PC-9 (cell line): ENCODE measurements at regions of chr19 and their contacts with region 1.

Region 1: DNA sequence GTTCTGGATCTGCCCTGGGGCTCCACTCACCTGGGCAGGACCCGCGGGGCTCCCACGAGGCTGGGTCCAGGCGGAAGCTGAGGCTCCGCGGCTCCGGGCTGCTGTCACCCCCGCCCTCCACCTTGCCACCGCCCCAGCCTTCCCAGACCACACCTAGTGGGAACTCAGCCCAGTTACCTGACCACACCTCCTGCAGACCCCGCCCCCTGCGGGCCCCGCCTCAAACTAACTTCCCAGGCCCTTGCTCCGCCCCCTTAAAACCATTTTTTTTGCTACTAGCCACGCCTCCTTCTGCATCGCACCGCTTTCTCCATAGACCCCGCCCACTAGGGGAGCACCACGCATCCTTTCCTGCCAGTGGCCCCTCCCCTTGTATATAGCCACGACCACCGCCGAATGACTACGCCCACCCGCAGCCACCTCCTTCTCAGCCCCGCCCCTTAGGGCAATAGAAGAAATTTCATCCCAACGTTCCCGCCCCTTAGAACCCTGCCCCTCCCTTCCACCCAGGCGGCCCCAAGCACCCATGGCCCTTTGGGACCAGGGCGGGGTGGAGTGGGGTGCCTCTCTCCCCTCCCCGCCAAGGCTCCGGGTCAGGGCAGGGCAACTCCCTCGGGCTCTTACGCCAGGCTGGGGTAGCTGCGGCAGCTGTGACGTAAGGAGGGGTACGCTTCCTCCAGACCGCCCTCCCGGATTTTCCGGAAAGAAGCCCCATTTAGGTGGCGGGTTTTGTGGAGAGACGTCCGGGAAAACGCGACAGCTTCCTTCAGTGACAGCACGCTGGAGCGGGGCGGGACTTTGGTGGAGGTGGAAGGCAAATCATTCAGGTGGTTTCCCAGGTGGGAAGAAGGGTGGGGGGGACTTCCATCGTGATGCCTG is at the start of gene SH2D3A:
- DNase-seq: peak; percentile 81 to 93
- H3K4me3 ChIP-seq: peak within 1 kb of the TSS; percentile 74
- H3K27ac ChIP-seq: peak within 1 kb of the TSS; percentile 98
- H3K4me1 ChIP-seq: peaks cover 26% of the 10 kb centered on the region
- H3K27me3 ChIP-seq: no peaks in the 10 kb centered on the region
- CTCF ChIP-seq: no peak
- total RNA-seq, gene SH2D3A: 43.3 and 43.4 TPM in 2 replicates

Region 2: DNA sequence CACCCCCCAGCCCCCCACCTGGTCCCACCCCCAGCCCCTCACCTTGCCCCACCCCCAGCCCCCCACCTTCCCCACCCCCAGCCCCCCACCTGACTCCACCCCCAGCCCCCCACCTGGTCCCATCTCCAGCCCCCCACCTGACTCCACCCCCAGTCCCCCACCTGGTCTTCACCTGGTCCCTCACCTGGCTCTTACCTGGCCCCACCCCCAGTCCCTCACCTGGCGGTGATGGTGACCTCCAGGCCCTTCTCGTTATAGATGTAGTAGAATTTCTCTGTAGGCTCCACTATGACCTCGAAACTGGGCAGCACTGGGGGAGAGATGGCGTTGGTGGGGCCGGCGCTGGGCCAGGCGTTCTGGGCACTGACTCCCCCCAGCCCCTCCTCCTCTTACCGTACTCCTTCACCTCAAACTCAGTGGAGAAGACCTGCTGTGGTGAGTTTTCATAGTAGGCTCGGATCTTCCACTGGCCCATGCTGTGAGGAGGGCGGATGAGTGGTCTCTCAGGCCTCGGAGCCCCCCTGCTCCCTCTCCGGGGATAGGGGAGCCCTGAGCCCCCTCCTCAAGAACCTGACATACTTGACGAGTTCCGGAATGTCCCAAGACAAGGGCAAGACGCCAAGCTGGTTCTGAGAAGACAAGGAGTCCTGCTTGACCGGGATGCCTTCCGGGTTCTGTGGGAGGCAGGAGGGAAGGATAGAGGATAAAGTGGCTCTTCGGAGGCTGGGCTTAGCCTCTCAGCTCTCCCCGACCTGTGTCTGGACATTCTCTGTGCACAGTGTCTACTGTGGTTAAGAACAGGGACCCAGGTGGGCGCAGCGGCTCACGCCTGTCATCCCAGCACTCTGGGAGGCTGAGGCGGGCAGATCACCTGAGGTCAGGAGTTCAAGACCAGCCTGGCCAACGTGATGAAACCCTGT is 53.6 kb before region 1 on chr19:
- CTCF ChIA-PET with region 1: interaction called, 14 read pairs
- POLR2A ChIA-PET with region 1: no interaction called
- intact Hi-C with region 1: no loop called
- DNase-seq: no peak
- H3K4me3 ChIP-seq: no peak overlapping the region
- H3K27ac ChIP-seq: no peak overlapping the region
- H3K4me1 ChIP-seq: 0 out of 2 replicates have a peak, but pooled peaks cover under 1% of the 10 kb centered on the region
- H3K27me3 ChIP-seq: no peaks in the 10 kb centered on the region
- CTCF ChIP-seq: no peak

Region 3: GRCh38 chr19:6744381-6745291 is 23.0 kb before region 1 on chr19:
- CTCF ChIA-PET with region 1: no interaction called
- POLR2A ChIA-PET with region 1: interaction called, 3 read pairs
- intact Hi-C with region 1: loop called (anchors 1 kb)
- DNase-seq: peak; percentile 82 to 91
- H3K4me3 ChIP-seq: peak overlapping the region; percentile 38; the same call in 1 of the 2 replicates
- H3K27ac ChIP-seq: peak overlapping the region; percentile 88
- H3K4me1 ChIP-seq: peaks cover 49% of the 10 kb centered on the region
- H3K27me3 ChIP-seq: no peaks in the 10 kb centered on the region
- CTCF ChIP-seq: no peak

Region 4: DNA sequence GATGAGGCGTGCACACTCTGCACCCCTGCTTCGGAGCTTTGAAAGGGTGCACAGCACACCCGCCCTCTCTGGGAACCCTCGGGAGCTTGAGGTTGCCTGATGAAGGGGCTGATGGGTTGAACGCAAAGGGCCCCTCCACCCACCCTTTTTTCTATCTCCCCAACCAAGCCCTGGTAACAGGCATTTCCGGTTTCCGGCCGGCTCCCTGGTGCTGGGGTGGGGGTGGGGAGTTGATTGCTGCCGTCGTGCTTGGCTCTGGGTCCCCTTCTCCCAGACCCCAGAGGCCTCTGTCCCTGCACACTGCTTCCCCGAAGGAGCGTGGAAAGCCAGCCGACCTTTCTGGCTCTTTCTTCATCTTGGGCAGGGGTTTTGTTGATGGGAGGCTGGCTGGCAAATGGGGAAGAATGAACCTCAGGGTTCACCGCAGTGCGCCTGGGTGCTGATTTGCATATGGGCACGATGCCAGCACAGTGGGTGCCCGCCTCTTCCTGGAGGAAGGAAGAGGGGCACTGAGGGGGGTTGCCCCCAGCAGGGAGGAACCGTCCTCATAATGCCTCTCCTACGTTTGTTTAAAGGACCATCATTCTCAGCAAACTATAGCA is 34.0 kb after region 1 on chr19:
- CTCF ChIA-PET with region 1: interaction called, 3 read pairs
- POLR2A ChIA-PET with region 1: interaction called, 15 read pairs
- intact Hi-C with region 1: loop called (anchors 1 kb)
- DNase-seq: peak; percentile 62 to 66
- H3K4me3 ChIP-seq: peak overlapping the region; percentile 57
- H3K27ac ChIP-seq: peak overlapping the region; percentile 96
- H3K4me1 ChIP-seq: peaks cover 24% of the 10 kb centered on the region
- H3K27me3 ChIP-seq: no peaks in the 10 kb centered on the region
- CTCF ChIP-seq: no peak

Region 5: DNA sequence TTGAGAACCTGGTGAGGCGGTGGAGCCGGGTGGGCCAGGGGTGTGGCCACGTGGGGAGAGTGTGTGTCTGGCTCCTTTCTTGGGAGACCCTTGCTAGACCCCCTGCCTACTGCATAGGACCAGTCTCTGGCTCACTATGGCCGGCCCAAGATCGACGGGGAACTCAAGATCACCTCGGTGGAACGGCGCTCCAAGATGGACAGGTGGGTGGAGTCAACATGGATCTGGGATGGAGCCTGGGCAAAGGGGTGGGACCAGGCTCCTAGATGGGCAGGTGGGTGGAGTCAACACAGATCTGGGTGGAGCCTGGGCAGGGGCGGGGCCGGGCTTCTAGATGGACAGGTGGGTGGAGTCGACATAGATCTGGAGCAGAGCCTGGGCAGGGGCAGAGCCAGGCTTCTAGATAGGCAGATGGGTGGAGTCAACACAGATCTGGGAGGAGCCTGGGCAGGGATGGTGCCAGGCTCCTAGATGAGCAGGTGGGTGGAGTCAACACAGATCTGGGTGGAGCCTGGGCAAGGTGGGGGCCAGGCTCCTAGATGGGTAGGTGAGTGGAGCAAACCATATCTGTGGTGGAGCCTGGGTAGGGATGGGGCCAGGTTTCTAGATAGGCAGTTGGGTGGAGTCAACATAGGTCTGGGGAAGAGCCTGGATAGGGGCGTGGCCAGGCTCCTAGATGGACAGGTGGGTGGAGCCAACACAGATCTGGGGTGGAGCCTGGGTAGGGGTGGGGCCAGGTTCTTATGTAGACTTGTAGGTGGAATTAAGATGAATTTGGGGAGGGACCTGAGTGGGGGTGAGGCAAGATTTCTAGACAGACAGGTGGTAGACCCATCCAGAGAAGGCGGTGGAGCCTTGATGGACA is 61.3 kb after region 1 on chr19:
- CTCF ChIA-PET with region 1: no interaction called
- POLR2A ChIA-PET with region 1: no interaction called
- intact Hi-C with region 1: loop called (anchors 1 kb)
- DNase-seq: peak; percentile 83 to 88
- H3K4me3 ChIP-seq: peak overlapping the region; percentile 73
- H3K27ac ChIP-seq: peak overlapping the region; percentile 82
- H3K4me1 ChIP-seq: peaks cover 8% of the 10 kb centered on the region
- H3K27me3 ChIP-seq: no peaks in the 10 kb centered on the region
- CTCF ChIP-seq: no peak